Endothelial cell of umbilical vein (primary cell): ENCODE measurements at regions of chr1 and their contacts with region 1.

Region 1: DNA sequence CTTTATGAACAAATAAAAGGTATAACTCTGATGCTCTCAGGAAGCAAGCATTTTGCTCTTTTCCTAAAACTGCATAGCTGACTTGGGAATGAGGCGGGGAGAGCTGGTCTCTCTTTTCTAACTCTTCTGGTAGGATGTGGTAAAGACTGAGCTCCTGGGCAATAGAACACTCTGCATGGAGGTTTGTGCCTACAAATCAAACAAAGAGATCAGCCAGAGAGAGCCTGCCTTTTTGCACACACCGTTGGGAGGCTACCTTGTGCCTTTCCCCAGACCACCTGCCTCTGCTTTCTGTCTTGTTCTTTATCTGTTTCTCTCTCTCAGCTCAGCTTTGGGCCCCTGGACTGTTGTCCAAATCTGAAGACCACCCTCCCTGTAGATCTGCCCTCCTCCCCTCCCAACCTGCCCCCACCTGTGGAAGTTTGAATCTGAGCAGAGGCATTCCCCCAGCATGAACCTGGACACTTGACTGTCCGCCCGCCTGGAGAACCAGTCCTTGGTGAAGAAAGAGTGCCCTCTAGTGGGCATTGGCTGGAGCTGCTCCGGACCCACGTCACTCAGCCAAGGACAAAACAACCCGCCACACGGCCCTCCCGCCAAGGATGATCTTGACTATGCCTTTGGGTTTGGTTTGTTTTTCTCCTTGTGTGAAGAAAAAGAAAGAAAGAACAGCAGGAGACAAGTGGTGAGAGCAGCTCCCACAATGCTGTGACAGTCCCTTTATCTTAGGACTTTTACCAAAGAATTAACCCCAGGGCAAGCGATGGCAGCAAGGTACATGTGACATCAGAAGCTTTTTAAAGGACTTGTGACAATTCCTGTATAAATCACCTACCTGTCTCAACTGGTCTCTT is 228.2 kb downstream of the PBX1 start:
- DNase-seq: peak; percentile 70
- H3K4me3 ChIP-seq: no peak overlapping the region
- H3K27ac ChIP-seq: no peak overlapping the region
- H3K4me1 ChIP-seq: no peaks in the 10 kb centered on the region
- H3K27me3 ChIP-seq: no peaks in the 10 kb centered on the region
- CTCF ChIP-seq: peak; percentile 92
- POLR2A ChIP-seq: no peak

Region 2: GRCh38 chr1:163528710-163529348 is 1258.4 kb before region 1 on chr1:
- CTCF ChIA-PET with region 1: interaction called, 8 read pairs
- POLR2A ChIA-PET with region 1: no interaction called
- dilution Hi-C with region 1: no loop called
- intact Hi-C with region 1: loop called (anchors 1 kb)
- DNase-seq: peak; percentile 48
- H3K4me3 ChIP-seq: no peak overlapping the region
- H3K27ac ChIP-seq: no peak overlapping the region
- H3K4me1 ChIP-seq: no peaks in the 10 kb centered on the region
- H3K27me3 ChIP-seq: no peaks in the 10 kb centered on the region
- CTCF ChIP-seq: peak; percentile 21 to 34
- POLR2A ChIP-seq: no peak

Region 3: GRCh38 chr1:163820766-163821165 is 966.4 kb before region 1 on chr1:
- CTCF ChIA-PET with region 1: no interaction called
- POLR2A ChIA-PET with region 1: no interaction called
- dilution Hi-C with region 1: no loop called
- intact Hi-C with region 1: loop called (anchors 1 kb)
- DNase-seq: peak; percentile 11
- H3K4me3 ChIP-seq: no peak overlapping the region
- H3K27ac ChIP-seq: no peak overlapping the region
- H3K4me1 ChIP-seq: no peaks in the 10 kb centered on the region
- H3K27me3 ChIP-seq: no peaks in the 10 kb centered on the region
- CTCF ChIP-seq: no peak
- POLR2A ChIP-seq: no peak

Region 4: DNA sequence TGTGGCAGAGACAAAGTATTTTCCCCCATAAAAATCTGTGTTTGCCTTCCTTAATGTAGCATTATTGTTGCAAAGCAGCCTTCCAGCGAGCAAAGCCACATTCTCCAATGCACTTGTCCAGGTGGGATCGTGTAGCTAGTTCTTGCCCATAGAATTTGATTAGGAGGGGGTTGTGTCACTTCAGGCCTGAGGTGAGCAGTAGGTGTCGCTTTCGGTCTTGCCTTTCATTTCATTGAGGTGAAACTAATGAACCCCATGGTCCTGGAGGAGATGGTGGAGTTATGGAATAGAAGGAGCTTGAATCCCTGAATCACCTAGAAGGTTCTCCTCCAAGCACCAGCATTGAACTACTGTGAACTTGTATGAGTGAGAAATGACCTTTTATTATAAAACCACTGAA is 547.1 kb before region 1 on chr1:
- CTCF ChIA-PET with region 1: no interaction called
- POLR2A ChIA-PET with region 1: no interaction called
- dilution Hi-C with region 1: no loop called
- intact Hi-C with region 1: loop called (anchors 1 kb)
- DNase-seq: no peak
- H3K4me3 ChIP-seq: no peak overlapping the region
- H3K27ac ChIP-seq: no peak overlapping the region
- H3K4me1 ChIP-seq: no peaks in the 10 kb centered on the region
- H3K27me3 ChIP-seq: no peaks in the 10 kb centered on the region
- CTCF ChIP-seq: no peak
- POLR2A ChIP-seq: no peak

Region 5: DNA sequence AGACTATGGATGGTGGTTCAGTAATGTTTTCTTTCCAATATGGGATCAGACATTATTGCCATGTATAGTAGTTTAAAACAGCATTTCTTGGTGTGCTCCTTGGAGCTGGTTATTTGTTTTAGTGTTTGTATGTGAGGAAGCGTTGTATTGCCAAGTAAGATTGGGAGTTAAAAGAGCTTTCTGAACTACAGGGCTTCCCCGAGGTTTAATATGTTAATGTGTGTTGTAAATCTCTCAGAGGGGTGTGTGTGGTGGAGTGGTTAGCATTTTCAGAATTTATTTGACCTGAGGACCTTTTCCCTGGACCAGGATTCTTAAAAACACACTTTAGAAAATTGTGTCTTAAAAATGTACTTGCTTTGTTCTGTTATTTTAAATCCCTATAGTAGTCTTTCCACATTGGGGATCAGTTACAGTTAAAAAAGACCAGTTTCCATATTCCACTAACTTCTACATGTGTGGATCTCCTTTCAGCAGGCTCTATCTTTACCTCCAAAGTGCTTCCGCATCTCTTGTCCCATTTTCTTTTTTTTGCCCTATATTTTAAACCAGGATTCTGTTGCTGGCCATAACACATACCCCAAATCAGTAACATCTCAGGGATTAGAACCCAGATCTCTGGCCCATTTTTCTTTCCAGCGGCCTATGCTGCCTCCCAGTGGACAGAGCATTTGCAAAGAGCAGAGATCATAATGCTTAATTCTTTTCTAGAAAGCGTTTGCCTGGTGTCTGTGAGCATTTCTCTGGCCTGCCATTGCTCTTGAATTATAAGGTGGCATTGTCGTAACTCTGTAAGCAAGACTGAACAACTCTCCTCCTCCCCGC is 169.6 kb before region 1 on chr1:
- CTCF ChIA-PET with region 1: interaction called, 8 read pairs
- POLR2A ChIA-PET with region 1: no interaction called
- dilution Hi-C with region 1: no loop called
- intact Hi-C with region 1: loop called (anchors 2 kb)
- DNase-seq: peak; percentile 32
- H3K4me3 ChIP-seq: no peak overlapping the region
- H3K27ac ChIP-seq: no peak overlapping the region
- H3K4me1 ChIP-seq: peaks cover 10% of the 10 kb centered on the region
- H3K27me3 ChIP-seq: no peaks in the 10 kb centered on the region
- CTCF ChIP-seq: peak; percentile 38 to 46
- POLR2A ChIP-seq: no peak

Region 6: GRCh38 chr1:164712131-164713036 is 74.8 kb before region 1 on chr1:
- CTCF ChIA-PET with region 1: interaction called, 9 read pairs
- POLR2A ChIA-PET with region 1: interaction called, 6 read pairs
- dilution Hi-C with region 1: no loop called
- intact Hi-C with region 1: loop called (anchors 2 kb)
- DNase-seq: peak; percentile 100
- H3K4me3 ChIP-seq: no peak overlapping the region
- H3K27ac ChIP-seq: peak overlapping the region; percentile 29
- H3K4me1 ChIP-seq: peaks cover 26% of the 10 kb centered on the region
- H3K27me3 ChIP-seq: no peaks in the 10 kb centered on the region
- CTCF ChIP-seq: no peak
- POLR2A ChIP-seq: peak; percentile 73